ENCODE measurements at regions of chr9 and their contacts with region 1.

Region 1: GRCh38 chr9:69421908-69422801 is 97.1 kb downstream of the ENTREP1 start:
- DNase-seq: peak; percentile 37 to 67
- ATAC-seq: peak; percentile 83 to 97 (median 87)
- H3K4me3 ChIP-seq: no peak overlapping the region
- H3K27ac ChIP-seq: no peak overlapping the region
- H3K4me1 ChIP-seq: no peaks in the 10 kb centered on the region
- H3K27me3 ChIP-seq: no peaks in the 10 kb centered on the region
- CTCF ChIP-seq: peak; percentile 78

Region 2: DNA sequence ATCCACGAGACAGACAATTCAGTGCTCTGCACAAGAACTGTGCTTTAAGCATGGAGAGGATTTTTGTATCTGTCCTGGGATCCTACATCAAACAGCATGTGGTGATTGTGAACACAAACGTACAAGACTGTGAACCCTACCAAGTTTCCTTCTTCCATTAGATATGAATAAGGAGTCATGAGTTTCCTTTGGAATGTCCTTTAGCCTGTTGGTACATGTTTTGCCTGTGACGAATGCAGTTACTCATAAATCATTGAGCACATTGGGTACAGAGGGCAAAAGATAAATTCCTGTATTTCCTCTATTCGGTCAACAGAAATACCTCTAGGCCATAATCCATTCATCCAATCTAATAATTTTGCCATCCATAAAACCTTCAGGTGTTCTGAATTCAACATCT is 325.1 kb before region 1 on chr9:
- intact Hi-C with region 1: no loop called
- DNase-seq: no peak
- ATAC-seq: peak; percentile 45 to 80 (median 50)
- H3K4me3 ChIP-seq: no peak overlapping the region
- H3K27ac ChIP-seq: no peak overlapping the region
- H3K4me1 ChIP-seq: no peaks in the 10 kb centered on the region
- H3K27me3 ChIP-seq: no peaks in the 10 kb centered on the region
- CTCF ChIP-seq: no peak

Region 3: GRCh38 chr9:69223605-69224004 is 198.6 kb before region 1 on chr9:
- intact Hi-C with region 1: no loop called
- DNase-seq: no peak
- ATAC-seq: peak; percentile 82 to 95 (median 90)
- H3K4me3 ChIP-seq: no peak overlapping the region
- H3K27ac ChIP-seq: no peak overlapping the region
- H3K4me1 ChIP-seq: no peaks in the 10 kb centered on the region
- H3K27me3 ChIP-seq: no peaks in the 10 kb centered on the region
- CTCF ChIP-seq: peak; percentile 70

Region 4: DNA sequence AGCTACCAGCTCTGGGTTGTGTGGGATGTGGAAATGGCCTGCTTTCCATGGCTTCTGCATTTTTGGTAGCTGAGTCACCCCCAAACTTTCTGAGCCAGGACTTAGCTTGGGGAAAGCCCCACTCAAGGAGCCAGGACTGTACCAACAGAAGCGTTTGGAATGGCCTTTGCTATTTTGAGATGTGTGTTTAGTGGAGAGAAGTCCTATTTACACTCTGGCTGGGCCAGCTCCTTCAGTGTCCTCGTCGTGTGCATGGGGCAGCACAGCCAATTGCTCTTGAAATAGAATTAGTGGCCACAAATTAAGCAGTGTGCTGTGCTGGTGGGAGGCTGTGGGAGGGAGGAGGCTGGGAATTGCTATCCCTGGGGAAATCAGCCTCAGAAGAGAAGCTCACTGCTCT is 45.5 kb before region 1 on chr9:
- intact Hi-C with region 1: no loop called
- DNase-seq: peak in 1 of 2 donors; percentile 68
- ATAC-seq: peak; percentile 5 to 54 (median 48)
- H3K4me3 ChIP-seq: peak overlapping the region; percentile 2
- H3K27ac ChIP-seq: peak overlapping the region; percentile 96
- H3K4me1 ChIP-seq: peaks cover 56% of the 10 kb centered on the region
- H3K27me3 ChIP-seq: no peaks in the 10 kb centered on the region
- CTCF ChIP-seq: no peak

Region 5: GRCh38 chr9:69485470-69485869 is 63.3 kb after region 1 on chr9:
- intact Hi-C with region 1: no loop called
- DNase-seq: no peak
- ATAC-seq: no peak
- H3K4me3 ChIP-seq: no peak overlapping the region
- H3K27ac ChIP-seq: no peak overlapping the region
- H3K4me1 ChIP-seq: peaks cover 14% of the 10 kb centered on the region
- H3K27me3 ChIP-seq: no peaks in the 10 kb centered on the region
- CTCF ChIP-seq: no peak

Region 6: GRCh38 chr9:69496846-69497450 is 74.8 kb after region 1 on chr9:
- intact Hi-C with region 1: loop called in 1 of 2 experiments (anchors 5 kb)
- DNase-seq: no peak
- ATAC-seq: no peak
- H3K4me3 ChIP-seq: no peak overlapping the region
- H3K27ac ChIP-seq: no peak overlapping the region
- H3K4me1 ChIP-seq: peaks cover 9% of the 10 kb centered on the region
- H3K27me3 ChIP-seq: no peaks in the 10 kb centered on the region
- CTCF ChIP-seq: no peak

Region 7: DNA sequence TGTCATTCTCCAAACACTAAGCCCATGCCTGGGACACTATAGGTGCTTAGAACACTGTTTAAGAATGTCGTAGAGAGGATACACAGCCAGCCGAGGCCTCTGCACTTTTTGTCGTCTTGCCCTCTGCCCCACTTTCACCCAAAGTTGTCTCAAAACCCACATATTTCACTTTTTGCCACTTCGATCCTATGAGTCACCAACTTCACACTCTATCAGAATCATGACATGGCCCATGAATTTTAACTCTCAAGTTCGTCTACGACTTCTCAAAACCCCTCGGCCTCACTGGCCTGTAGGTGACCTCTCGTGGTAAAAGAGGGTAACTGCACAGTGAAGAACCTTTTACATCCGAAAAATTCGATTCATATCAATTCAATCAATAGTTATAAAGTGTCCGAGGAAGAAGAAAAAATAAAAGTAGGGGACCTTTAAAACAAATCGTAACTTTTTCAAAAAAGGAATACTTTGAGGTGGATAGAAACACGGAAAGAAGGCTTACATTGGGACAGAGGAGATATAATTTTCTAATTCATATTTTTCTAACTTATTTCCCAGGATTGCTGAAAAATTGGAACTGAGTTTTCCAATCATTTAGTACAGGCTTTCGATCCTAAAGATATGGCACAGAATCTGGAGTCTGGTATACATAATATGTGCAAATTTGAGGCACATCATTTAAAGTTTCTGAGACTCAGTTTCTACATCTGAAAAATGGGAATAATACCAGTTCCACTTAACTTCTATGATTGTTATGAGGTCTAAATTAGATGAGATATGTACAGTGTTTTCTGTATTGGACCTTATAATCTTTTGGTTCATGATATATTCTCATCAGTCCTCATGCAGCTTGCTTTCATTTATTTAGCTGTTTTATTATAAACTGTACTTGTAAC is 127.4 kb after region 1 on chr9:
- intact Hi-C with region 1: loop called (anchors 2 kb)
- DNase-seq: no peak
- ATAC-seq: peak; percentile 57 to 90 (median 75)
- H3K4me3 ChIP-seq: no peak overlapping the region
- H3K27ac ChIP-seq: no peak overlapping the region
- H3K4me1 ChIP-seq: peaks cover 3% of the 10 kb centered on the region
- H3K27me3 ChIP-seq: no peaks in the 10 kb centered on the region
- CTCF ChIP-seq: peak; percentile 86

Region 8: DNA sequence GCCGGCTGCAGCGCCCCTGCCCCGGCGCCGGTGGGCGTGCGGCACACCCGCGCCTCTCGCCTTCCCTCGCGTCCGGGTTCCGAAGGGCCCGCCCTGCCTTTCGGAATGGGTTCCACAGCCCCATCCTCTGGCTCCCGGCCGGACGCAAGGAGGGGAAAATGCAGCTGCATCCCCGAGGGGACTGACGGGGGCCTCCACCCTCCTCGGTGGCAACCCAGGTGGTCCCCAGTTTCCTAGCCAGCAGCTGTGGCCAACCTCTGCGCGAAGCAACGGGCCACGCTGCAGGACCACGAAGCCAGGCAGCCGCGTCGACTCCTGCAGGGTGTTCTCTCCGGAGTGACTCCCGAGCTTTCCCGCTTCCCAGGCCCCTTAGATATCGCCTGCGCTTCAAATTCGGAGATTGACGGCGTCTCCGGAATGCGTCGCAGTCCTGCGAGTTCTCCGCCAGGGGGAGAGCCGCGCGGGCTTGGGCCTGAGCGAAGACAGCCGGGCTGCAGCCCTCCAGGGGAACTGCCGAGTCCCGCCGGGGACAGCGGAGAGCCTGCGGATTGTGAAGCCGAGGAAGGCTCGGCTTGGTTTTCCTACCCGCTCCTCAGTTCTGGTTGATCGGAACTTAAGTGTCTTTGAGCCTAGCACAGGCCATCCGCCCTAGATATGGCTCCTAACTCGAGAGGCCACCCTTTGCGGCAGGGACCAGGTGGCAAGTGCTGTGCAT is 250.6 kb after region 1 on chr9:
- intact Hi-C with region 1: loop called in 1 of 2 experiments (anchors 5 kb)
- DNase-seq: peak; percentile 84 to 92
- ATAC-seq: peak; percentile 91 to 94 (median 94)
- H3K4me3 ChIP-seq: peak overlapping the region; percentile 78
- H3K27ac ChIP-seq: peak overlapping the region; percentile 65
- H3K4me1 ChIP-seq: peaks cover 3% of the 10 kb centered on the region
- H3K27me3 ChIP-seq: no peaks in the 10 kb centered on the region
- CTCF ChIP-seq: peak; percentile 89

Region 9: DNA sequence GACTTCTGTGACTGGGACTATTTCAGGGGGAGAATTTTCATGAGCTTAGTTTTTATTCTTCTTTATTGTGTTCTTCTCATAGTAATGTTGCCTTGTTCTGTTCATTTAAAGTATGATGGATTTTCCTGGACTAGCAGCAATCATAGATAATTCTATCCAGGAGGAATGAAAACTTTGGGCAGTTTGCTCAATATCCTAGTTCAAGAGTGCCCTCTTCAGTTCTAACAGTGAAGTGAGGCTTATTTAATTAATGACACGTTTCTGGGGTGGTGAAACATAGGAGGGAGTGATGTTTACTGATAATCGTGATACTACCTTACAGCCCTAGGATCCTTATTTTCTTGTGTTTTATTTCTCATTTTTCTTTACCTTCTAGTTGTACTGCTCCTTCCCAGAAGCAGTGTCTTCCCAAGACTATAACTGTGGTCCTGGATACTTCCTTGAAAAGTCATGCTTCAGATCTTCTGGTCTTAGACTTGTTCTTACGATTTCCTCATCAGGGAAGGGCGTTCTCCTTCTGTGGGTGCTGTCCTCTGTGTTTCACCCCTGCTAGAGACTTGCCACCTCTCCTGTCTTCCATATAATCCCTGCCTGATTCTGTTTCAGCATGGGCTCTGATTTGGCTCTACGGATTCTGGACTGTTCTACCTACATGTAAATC is 455.8 kb after region 1 on chr9:
- intact Hi-C with region 1: loop called (anchors 2 to 5 kb)
- DNase-seq: no peak
- ATAC-seq: peak; percentile 65 to 84 (median 72)
- H3K4me3 ChIP-seq: no peak overlapping the region
- H3K27ac ChIP-seq: no peak overlapping the region
- H3K4me1 ChIP-seq: peaks cover 13% of the 10 kb centered on the region
- H3K27me3 ChIP-seq: no peaks in the 10 kb centered on the region
- CTCF ChIP-seq: peak; percentile 60

Region 10: GRCh38 chr9:69919461-69920061 is 497.4 kb after region 1 on chr9:
- intact Hi-C with region 1: loop called (anchors 5 kb)
- DNase-seq: no peak
- ATAC-seq: peak; percentile 44 to 84 (median 69)
- H3K4me3 ChIP-seq: no peak overlapping the region
- H3K27ac ChIP-seq: no peak overlapping the region
- H3K4me1 ChIP-seq: no peaks in the 10 kb centered on the region
- H3K27me3 ChIP-seq: no peaks in the 10 kb centered on the region
- CTCF ChIP-seq: peak; percentile 68

Measured in psoas muscle (tissue), 8 donors.